ENCODE measurements at regions of chr12 and their contacts with region 1.

Region 1: DNA sequence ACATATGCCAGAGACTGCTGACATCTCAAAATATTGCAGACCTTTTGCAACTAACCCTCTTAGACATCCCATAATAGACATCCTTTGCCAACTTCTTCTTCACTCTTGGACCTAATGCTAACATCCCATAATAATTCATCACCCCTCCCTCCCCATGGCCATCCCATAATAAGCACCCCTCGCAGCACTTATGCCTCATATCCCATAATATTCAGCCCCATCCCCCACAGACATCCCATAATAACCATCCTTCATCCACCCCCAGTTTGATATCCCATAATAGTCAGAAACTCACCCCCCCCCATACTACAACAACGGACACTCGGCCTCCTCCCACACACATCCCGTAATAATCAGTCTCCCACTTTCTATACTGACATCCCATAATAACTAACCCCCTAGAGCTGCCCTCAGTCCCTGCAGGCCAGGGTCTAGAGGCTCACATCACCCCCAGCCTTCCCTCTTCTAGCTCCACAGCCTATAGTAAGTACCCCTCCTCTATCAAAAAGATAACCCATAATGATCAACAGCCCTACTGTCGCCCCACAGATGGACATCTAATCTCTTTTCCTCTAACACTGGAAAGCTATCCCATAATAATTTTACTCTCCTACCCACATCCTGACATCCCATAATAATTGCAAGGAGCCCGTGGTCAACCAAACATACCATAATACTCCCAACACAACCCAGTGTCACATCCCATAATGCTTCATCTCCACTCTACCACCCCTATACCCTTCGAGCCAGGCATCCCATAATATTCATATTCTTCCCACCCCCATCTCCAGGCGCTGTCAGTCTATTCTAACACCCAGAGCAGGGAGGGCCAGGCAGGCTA is 792 bp upstream of the CHD4 start:
- DNase-seq: peak in 3 of 10 donors; percentile 59 to 81 (median 67)
- H3K4me3 ChIP-seq: peak overlapping the region in 14 of 59 donors; percentile 2 to 40 (median 24)
- H3K27ac ChIP-seq: peak overlapping the region; percentile 34 to 97 (median 91)
- H3K27me3 ChIP-seq: no peaks in the 10 kb centered on the region
- CTCF ChIP-seq: no peak

Region 2: DNA sequence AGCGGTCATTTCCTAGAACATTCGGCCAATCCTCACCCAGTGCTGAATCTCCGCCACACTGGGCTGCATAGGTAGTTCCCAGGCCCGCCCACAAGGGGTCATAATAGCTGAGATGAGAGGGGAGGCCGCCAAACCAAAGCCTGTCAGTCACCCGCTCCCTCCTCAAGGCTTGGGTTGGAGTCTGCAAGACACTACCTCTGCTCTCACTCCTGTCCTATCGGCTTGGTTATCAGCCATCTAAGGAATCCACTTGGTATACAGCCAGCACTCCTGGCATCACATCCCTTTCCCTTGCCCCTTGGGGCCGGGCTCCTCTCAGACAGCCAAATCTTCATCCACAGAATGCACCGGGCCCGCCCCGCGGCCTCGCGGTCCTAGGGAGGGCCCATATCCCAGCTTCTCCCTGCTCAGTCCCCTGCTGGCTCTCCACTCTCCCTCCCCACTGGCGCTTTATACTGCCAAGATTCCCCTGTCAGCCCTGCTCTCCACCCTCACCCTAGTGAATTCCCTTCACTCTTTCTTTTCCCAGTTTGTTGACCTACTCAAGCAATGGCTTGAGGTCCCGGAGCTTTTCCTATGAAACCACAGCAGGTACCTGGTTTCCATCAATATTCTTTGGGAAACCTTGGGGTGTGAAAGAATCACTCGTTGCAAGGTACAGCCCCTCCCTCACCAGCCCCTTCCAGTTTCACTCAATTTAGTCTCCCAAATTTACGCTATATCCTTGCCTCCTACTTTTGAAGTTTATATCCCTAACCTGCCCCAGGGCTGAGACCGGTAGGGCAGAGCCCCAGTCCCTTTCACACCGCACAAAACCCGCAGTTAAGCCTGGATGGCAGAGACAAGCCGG is 53.6 kb before region 1 on chr12:
- intact Hi-C with region 1: loop called in 1 of 2 experiments (anchors 5 kb)
- DNase-seq: peak in 7 of 10 donors; percentile 67 to 88 (median 75)
- H3K4me3 ChIP-seq: peak overlapping the region; percentile 64 to 100 (median 95)
- H3K27ac ChIP-seq: peak overlapping the region in 58 of 59 donors; percentile 8 to 98 (median 94)
- H3K27me3 ChIP-seq: no peaks in the 10 kb centered on the region
- CTCF ChIP-seq: peak in 55 of 56 donors; percentile 25 to 76 (median 58)

Region 3: DNA sequence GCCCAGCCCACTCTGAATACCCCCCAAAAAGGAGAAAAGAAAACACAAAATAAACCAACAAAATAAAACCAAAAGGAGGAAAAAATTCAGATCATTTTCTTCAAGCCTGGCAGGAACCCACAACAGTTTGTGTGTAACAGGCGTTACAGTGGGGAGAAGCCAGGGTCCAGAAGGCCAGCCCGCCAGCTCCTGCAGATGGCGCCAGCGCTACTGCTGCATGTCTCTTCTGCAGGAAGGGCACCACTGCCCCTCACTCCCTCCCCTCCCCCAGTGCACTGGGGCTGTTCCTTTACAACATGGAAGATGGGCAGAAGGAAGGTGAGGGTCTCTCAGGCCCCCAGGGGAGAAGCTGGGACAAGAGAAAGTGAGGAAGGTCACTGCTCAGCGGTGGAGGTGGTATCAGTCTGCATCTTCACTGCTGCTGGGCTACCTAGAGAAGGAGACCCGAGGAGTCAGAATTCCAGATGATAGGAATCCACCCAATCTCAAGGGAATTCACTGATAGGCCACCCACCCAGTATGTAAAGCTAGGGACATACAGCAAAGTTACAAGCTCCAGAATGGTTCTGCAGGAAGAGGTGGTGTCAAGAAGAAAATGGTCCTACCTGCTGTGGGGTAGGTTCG is 37.6 kb before region 1 on chr12:
- intact Hi-C with region 1: loop called (anchors 2 to 5 kb)
- DNase-seq: peak in 3 of 10 donors; percentile 25 to 49 (median 43)
- H3K4me3 ChIP-seq: no peak overlapping the region
- H3K27ac ChIP-seq: peak overlapping the region in 1 of 59 donors; percentile 25
- H3K27me3 ChIP-seq: no peaks in the 10 kb centered on the region
- CTCF ChIP-seq: peak in 36 of 56 donors; percentile 8 to 45 (median 24)